ENCODE measurements at regions of chr3 and their contacts with region 1.

Region 1: DNA sequence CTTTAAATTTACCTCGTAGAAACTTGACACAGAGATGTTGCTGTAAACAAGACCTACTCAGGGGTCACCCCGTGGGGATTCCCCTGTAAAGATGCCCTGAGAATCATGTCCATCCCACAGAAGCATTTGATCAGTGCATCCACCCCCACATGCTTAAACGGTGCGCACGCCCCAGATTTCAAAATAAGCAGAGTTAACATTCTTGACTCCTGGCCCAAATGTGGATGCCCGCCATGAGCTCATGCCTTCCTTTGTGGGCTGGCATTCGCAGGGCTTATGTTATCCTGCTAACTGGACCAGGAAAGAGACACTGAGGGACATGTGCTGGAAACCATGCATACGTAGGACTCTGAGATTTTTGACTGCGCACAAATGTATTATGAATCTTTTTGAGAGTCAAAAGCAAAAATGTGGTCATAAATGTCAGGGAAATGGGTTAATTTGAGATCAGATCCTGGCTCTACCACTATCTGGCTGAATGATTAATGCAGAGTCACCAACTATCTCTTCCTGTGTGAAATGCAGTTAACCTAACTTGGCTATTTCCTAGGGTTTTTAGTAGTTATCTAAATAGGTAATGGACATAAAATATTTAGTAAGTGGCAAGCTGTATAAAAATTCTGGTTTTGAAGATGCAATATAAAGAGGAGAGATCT is 9.1 kb upstream of the TP63 start:
- DNase-seq: peak; percentile 22
- ATAC-seq: peak; percentile 61
- H3K4me3 Mint-ChIP-seq: no peak overlapping the region
- H3K27ac Mint-ChIP-seq: no peak overlapping the region
- H3K4me1 Mint-ChIP-seq: peaks cover 33% of the 10 kb centered on the region
- H3K27me3 Mint-ChIP-seq: no peaks in the 10 kb centered on the region

Region 2: GRCh38 chr3:189337673-189338091 is 284.4 kb before region 1 on chr3:
- CTCF ChIA-PET with region 1: no interaction called
- POLR2A ChIA-PET with region 1: no interaction called
- intact Hi-C with region 1: no loop called
- DNase-seq: no peak
- ATAC-seq: no peak
- H3K4me3 Mint-ChIP-seq: no peak overlapping the region
- H3K27ac Mint-ChIP-seq: no peak overlapping the region
- H3K4me1 Mint-ChIP-seq: peaks cover 22% of the 10 kb centered on the region
- H3K27me3 Mint-ChIP-seq: no peaks in the 10 kb centered on the region

Region 3: GRCh38 chr3:189404797-189405484 is 217.1 kb before region 1 on chr3:
- CTCF ChIA-PET with region 1: no interaction called
- POLR2A ChIA-PET with region 1: no interaction called
- intact Hi-C with region 1: no loop called
- DNase-seq: no peak
- ATAC-seq: peak; percentile 42
- H3K4me3 Mint-ChIP-seq: no peak overlapping the region
- H3K27ac Mint-ChIP-seq: no peak overlapping the region
- H3K4me1 Mint-ChIP-seq: peaks cover 10% of the 10 kb centered on the region
- H3K27me3 Mint-ChIP-seq: no peaks in the 10 kb centered on the region

Region 4: GRCh38 chr3:189512039-189512438 is 110.0 kb before region 1 on chr3:
- CTCF ChIA-PET with region 1: no interaction called
- POLR2A ChIA-PET with region 1: no interaction called
- intact Hi-C with region 1: no loop called
- DNase-seq: no peak
- ATAC-seq: no peak
- H3K4me3 Mint-ChIP-seq: no peak overlapping the region
- H3K27ac Mint-ChIP-seq: no peak overlapping the region
- H3K4me1 Mint-ChIP-seq: peaks cover 11% of the 10 kb centered on the region
- H3K27me3 Mint-ChIP-seq: peaks cover 2% of the 10 kb centered on the region

Region 5: GRCh38 chr3:189570916-189571315 is 51.2 kb before region 1 on chr3:
- CTCF ChIA-PET with region 1: no interaction called
- POLR2A ChIA-PET with region 1: no interaction called
- intact Hi-C with region 1: loop called in 1 of 2 experiments (anchors 5 kb)
- DNase-seq: no peak
- ATAC-seq: peak; percentile 64
- H3K4me3 Mint-ChIP-seq: no peak overlapping the region
- H3K27ac Mint-ChIP-seq: no peak overlapping the region
- H3K4me1 Mint-ChIP-seq: peaks cover 35% of the 10 kb centered on the region
- H3K27me3 Mint-ChIP-seq: peaks cover 1% of the 10 kb centered on the region